Activated B cell treated with CpG ODN at 0.5 μM for 24 hours (primary cell): ENCODE measurements at regions of chr21 and their contacts with region 1.

Region 1: DNA sequence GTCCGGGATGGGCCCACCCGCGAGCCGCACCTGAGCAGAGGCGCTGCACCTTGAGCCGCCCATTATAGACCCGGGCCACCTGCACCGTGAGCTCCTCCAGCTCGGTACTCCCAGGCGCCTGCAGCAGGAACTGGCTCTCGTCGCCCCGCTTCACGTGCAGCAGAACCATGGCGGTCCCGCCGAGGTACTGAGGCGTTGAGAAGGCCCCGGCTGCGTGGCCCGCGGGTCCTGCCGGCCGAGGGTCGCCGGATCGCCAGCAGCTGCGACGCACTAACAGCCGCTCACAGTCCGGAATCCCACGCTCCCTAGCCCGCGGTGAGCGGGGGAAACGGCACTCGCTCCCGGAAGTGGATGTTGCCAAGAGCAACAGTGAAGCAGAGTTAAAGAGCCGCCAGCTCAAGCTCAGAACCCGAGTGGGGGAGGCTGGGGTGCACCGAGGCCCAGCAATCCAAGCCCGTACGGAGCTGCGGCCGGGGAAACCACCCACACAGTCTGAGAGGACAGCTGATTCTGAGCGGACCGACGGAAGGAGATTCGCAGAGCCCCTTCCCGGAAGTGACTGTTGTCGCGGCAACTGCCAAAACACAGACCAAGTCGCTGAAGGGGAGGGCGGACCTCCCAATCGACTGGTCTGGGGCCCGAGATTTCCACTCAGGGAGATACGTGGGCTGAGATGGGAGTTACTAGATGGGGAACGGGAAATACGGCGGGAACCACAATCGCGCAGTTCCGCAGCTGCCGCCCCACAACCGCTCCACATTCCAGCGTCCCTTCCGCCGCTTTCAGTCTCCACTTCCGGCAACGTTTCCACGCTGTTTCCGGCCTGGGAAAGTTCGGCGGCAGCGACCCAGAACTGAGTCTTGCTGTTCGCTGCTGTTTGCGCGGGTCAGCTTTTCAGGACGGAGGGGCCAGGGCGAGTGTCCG is at the start of gene CFAP298:
- DNase-seq: peak; percentile 83
- ATAC-seq: peak; percentile 89
- H3K4me3 Mint-ChIP-seq: peak within 1 kb of the TSS; percentile 97
- H3K27ac Mint-ChIP-seq: peak within 1 kb of the TSS; percentile 96
- H3K4me1 Mint-ChIP-seq: peaks cover 12% of the 10 kb centered on the region
- H3K27me3 Mint-ChIP-seq: no peaks in the 10 kb centered on the region
- CTCF ChIP-seq: no peak
- total RNA-seq, gene CFAP298: 36.4 and 37.3 TPM in 2 replicates

Region 2: DNA sequence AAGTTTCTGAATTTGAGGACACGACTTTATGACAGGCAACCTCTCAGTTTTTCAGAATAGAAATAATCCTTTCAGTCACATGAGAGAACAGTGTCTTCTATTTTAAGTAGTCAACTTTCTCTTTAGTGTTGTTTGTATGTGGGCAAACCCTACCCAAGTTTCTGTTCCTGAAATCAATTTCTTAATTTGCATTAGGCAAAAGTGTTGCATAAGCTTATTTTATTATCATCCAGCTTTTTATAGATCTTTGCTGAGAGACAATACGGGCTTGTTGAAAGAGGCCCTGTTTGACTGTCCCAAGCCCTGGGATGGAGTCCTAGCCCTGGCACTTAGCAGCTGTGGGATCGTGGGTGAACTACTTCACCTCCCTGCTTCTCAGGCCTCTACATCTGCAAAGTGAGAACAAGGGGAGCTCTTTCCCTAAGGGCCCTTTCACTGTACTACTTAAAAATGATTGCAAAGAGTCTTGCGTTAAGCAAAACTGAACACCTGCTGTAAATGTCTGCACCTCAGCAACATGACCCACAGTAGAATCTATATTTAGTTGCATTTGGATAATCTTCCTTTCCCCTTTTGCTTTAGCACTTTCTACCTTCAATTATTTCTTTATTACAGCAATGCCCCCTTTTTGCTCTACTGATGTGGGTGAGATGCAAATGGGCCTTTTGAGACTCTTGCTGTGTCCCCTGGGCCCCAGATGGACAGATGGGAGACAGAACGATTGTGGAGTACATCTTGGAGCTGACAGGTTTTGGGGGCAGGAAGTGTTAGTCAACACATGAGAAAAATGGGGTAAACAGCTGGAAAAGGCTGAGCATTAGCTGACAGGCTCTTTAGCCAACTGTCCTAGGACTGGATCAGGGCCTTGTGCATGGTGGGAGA is 839.4 kb before region 1 on chr21:
- CTCF ChIA-PET with region 1: no interaction called
- POLR2A ChIA-PET with region 1: no interaction called
- intact Hi-C with region 1: loop called (anchors 5 kb)
- DNase-seq: peak; percentile 46
- ATAC-seq: peak; percentile 86
- H3K4me3 Mint-ChIP-seq: peak overlapping the region; percentile 76
- H3K27ac Mint-ChIP-seq: peak overlapping the region; percentile 98
- H3K4me1 Mint-ChIP-seq: peaks cover 61% of the 10 kb centered on the region
- H3K27me3 Mint-ChIP-seq: no peaks in the 10 kb centered on the region
- CTCF ChIP-seq: no peak

Region 3: DNA sequence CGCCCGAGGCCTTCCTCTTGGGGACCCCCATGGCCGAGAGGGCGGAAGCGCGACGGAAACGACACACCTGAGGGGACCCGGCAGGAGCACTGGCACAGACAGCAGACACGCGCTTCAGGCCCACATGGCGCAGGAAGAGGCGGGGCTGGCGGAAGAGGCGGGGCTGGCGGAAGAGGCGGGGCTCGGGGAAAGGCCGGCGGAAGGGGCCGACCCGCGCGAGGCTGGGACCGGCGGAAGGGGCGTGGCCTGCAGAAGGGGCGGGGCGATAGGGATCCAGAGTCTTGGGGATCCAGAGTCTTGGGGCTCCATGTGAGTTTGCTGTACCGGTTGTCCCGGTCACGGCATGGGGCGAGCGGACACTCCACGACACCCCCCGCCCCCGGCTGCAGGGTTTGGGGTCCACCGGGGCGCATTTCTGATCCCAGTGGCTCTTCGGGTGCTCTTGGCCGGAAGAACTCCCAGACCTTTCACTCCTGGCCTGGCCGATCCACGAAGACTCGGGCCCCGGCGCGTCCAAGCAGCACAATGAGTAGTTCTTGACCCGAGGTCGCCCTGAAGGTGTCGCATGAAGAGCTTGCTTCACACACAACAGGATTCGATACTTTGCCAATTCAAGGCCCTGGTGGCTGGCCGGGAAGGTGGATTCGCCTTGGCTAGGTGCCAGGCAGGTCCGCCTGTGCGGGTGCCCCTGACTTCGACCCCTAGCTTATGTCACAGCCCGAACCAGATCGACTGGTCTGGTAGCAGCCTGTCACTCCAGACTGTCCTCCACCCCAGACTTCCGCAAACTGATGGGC is 219.3 kb before region 1 on chr21 and contains the start of gene URB1:
- CTCF ChIA-PET with region 1: no interaction called
- POLR2A ChIA-PET with region 1: interaction called, 16 read pairs
- intact Hi-C with region 1: loop called (anchors 1 kb)
- DNase-seq: peak; percentile 97
- ATAC-seq: peak; percentile 97
- H3K4me3 Mint-ChIP-seq: peak within 1 kb of the TSS; percentile 87
- H3K27ac Mint-ChIP-seq: peak within 1 kb of the TSS; percentile 83
- H3K4me1 Mint-ChIP-seq: peaks cover 41% of the 10 kb centered on the region
- H3K27me3 Mint-ChIP-seq: peaks cover 6% of the 10 kb centered on the region
- CTCF ChIP-seq: no peak
- total RNA-seq, gene URB1: 18.1 and 22.2 TPM in 2 replicates

Region 4: GRCh38 chr21:32712043-32712442 is 99.7 kb after region 1 on chr21:
- CTCF ChIA-PET with region 1: no interaction called
- POLR2A ChIA-PET with region 1: no interaction called
- intact Hi-C with region 1: loop called (anchors 1 kb)
- DNase-seq: peak; percentile 32
- ATAC-seq: peak; percentile 95
- H3K4me3 Mint-ChIP-seq: peak overlapping the region; percentile 24
- H3K27ac Mint-ChIP-seq: no peak overlapping the region
- H3K4me1 Mint-ChIP-seq: peaks cover 20% of the 10 kb centered on the region
- H3K27me3 Mint-ChIP-seq: peaks cover 42% of the 10 kb centered on the region
- CTCF ChIP-seq: no peak

Region 5: GRCh38 chr21:33479679-33480480 is 867.5 kb after region 1 on chr21 and contains the start of gene TMEM50B:
- CTCF ChIA-PET with region 1: no interaction called
- POLR2A ChIA-PET with region 1: interaction called, 5 read pairs
- intact Hi-C with region 1: loop called (anchors 5 kb)
- DNase-seq: peak; percentile 88
- ATAC-seq: peak; percentile 88
- H3K4me3 Mint-ChIP-seq: peak within 1 kb of the TSS; percentile 92
- H3K27ac Mint-ChIP-seq: peak within 1 kb of the TSS; percentile 90
- H3K4me1 Mint-ChIP-seq: peaks cover 20% of the 10 kb centered on the region
- H3K27me3 Mint-ChIP-seq: no peaks in the 10 kb centered on the region
- CTCF ChIP-seq: no peak
- total RNA-seq, gene TMEM50B: 42.3 and 47.2 TPM in 2 replicates